ENCODE measurements at regions of chr16 and their contacts with region 1.

Region 1: DNA sequence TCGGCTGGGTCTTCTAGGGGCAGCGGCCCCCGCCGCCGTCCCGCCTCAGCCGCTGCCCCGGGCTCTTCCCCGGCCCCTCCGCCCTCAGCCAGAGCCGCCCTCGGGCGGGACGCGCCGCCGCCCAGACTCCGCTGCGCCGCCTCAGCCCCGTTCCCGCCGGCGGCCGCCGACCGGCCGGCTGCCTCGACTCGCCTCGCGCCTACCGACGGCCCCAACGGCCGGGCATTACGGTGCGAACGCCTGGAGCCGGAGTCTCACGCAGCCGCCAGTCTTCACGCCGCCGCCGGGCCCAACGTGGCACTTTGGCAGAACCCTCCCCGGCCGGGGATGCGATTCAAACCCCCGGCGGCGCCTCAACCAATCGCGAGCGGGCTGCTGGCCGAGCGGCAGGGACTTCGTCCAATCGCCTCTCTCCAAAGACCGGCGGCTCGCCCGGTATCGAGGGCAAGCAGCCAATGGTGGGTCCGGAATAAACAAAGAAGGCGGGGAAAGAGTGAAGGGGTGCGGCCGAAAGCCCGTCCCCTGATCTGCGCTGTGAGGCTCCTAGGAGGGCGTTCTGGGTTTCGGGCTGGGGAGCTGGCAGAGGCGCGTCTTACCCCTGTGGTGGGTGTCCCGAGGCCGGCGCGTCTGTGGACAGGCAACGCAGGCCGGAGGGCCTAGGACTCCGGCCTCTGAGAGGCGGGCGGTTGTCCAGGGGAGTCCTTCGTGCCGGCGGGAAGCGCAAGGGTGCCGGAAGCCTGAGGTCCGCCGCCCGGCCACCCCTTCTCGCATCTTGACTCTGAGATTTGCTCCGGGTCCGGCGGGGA is at the start of gene CDR2:
- DNase-seq: peak; percentile 98 to 100 (median 100)
- ATAC-seq: peak; percentile 96
- H3K4me3 ChIP-seq: peak within 1 kb of the TSS; percentile 86
- H3K27ac ChIP-seq: peak within 1 kb of the TSS; percentile 80
- H3K4me1 ChIP-seq: peaks cover 18 to 25% of the 10 kb centered on the region in 2 experiments; a peak in 4 of 5 replicates
- H3K27me3 ChIP-seq: no peaks in the 10 kb centered on the region
- CTCF ChIP-seq: no peak
- EP300 ChIP-seq: no peak
- POLR2A ChIP-seq: peak; percentile 79
- RAD21 ChIP-seq: no peak
- polyA plus RNA-seq, gene CDR2: 4.6 to 5.3 TPM

Region 2: DNA sequence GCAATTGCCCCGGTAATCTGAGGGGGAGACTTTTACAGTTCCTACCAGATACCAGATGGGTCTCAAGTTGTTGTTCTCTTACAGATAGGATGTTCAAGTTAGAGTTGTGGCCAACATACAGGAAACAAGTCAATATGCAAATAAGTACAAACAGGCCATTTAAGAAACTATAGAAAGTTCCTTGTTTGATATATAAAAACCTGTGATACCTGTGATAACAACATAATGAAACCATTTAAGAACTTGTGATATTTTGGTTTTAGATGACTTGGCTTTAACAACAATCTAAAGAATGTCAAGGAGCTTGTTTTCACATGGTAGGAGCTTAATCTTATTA is 16.9 kb before region 1 on chr16:
- CTCF ChIA-PET with region 1: interaction called, 3 read pairs
- POLR2A ChIA-PET with region 1: interaction called, 13 read pairs
- in situ Hi-C with region 1: no loop called
- intact Hi-C with region 1: no loop called
- DNase-seq: no peak
- ATAC-seq: no peak
- H3K4me3 ChIP-seq: no peak overlapping the region
- H3K27ac ChIP-seq: no peak overlapping the region
- H3K4me1 ChIP-seq: peaks cover 0 to 24% of the 10 kb centered on the region in 2 experiments; a peak in 3 of 5 replicates
- H3K27me3 ChIP-seq: no peaks in the 10 kb centered on the region
- CTCF ChIP-seq: no peak
- EP300 ChIP-seq: no peak
- POLR2A ChIP-seq: no peak
- RAD21 ChIP-seq: no peak